ENCODE measurements at regions of chr1 and their contacts with region 1.

Region 1: DNA sequence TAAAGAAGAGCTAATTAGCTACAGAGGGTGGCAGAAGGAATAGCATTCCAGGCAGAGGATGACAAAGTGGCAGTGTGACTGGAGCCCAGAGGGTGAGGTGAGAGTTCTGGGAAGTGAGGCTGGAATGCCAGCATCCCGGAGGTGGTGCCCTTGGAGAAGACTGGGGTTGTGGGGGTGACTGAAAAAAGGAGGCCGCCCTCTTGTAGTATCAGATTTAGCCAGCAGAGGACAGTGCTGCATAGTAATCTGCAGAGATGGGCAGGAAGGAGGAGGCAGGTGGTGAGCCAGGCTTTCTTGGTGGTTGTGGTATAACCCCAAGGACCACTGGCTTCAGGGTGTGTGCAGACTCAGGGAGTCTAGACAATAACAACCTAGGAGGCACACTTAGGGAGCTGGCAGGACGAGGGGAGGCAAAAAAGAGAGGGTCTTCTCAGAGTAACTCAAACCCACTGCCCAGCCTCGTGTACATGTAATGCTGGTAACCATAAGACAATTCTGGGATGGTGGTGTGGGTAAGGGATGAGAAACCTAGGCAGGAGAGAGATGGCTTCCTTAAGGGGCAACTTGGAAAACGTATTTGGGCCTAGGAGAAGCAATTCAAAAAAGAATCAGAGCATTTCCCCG is 30.5 kb downstream of the MROH7 start:
- DNase-seq: no peak
- ATAC-seq: peak in 2 of 4 donors; percentile 26 to 35
- H3K4me3 ChIP-seq: no peak overlapping the region
- H3K27ac ChIP-seq: no peak overlapping the region
- H3K4me1 ChIP-seq: no peaks in the 10 kb centered on the region
- H3K27me3 ChIP-seq: no peaks in the 10 kb centered on the region
- CTCF ChIP-seq: peak; percentile 23 to 65 (median 52)
- POLR2A ChIP-seq: no peak

Region 2: GRCh38 chr1:54425152-54425584 is 246.9 kb before region 1 on chr1:
- intact Hi-C with region 1: no loop called
- DNase-seq: no peak
- ATAC-seq: no peak
- H3K4me3 ChIP-seq: no peak overlapping the region
- H3K27ac ChIP-seq: no peak overlapping the region
- H3K4me1 ChIP-seq: no peaks in the 10 kb centered on the region
- H3K27me3 ChIP-seq: no peaks in the 10 kb centered on the region
- CTCF ChIP-seq: peak in 2 of 12 donors; percentile 14 to 15
- POLR2A ChIP-seq: no peak

Region 3: DNA sequence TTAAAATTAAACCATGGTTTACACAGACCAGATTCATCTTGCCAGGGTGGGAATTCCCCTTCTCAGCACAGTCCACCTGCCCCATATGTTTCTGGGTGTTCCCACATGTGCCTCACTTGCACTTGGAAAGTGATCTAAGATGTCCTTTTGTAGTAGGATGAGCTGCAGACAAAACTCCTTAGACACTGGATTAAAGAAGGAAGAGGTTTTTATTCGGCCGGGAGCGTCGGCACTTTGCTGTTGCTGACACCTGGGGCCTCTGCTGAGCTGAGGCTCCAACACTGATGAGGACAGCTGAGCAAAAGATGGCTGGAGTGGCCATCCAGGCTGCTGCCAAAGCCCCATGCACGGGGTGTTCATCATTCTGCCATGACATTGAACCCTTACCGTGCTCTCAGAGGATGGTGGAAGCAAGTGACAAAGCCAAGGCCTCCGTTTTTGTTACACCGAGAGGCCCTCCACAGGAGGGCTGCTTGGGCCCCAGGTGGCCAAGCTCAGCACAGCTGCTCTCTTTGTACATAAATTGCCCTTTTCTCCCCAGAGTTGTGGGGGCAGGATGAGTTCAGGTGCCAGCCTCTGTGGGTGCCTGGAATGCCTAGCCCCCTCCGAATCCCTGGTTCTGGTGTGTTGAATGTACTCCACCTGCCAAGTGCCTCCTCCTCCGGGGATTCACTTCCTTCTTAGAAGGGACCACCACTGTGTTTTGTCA is 131.4 kb before region 1 on chr1:
- intact Hi-C with region 1: no loop called
- DNase-seq: no peak
- ATAC-seq: no peak
- H3K4me3 ChIP-seq: no peak overlapping the region
- H3K27ac ChIP-seq: no peak overlapping the region
- H3K4me1 ChIP-seq: peaks cover 0 to 30% (median 10%) of the 10 kb centered on the region in 12 donors
- H3K27me3 ChIP-seq: peaks cover 0 to 7% (median 0%) of the 10 kb centered on the region in 9 donors
- CTCF ChIP-seq: no peak
- POLR2A ChIP-seq: no peak

Region 4: GRCh38 chr1:54810100-54810942 is 138.2 kb after region 1 on chr1:
- intact Hi-C with region 1: loop called in 4 of 10 experiments (anchors 5 to 10 kb)
- DNase-seq: peak in 4 of 5 donors; percentile 32 to 64 (median 56)
- ATAC-seq: peak; percentile 82 to 89 (median 86)
- H3K4me3 ChIP-seq: no peak overlapping the region
- H3K27ac ChIP-seq: no peak overlapping the region
- H3K4me1 ChIP-seq: no peaks in the 10 kb centered on the region
- H3K27me3 ChIP-seq: peaks cover 0 to 6% (median 0%) of the 10 kb centered on the region in 9 donors
- CTCF ChIP-seq: peak; percentile 60 to 79 (median 75)
- POLR2A ChIP-seq: no peak